ENCODE measurements at regions of chr2 and their contacts with region 1.

Region 1: DNA sequence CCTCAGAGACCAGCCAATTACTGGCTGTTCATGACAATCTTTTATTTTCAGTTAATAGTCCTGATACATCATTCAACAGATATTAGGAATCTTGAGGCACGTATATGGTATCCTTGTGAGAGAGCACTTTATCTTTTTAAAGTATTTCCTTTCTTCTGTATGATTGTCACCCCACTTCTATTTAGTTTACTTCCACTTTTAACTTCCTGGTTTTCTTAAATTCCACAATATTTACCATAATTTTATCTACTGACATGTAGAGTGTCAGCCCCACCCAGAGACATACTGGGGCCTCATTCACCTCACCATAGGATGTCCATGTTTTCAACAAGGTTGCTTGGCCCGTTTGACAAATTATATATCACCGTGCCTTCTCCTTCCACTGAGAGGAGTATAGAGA is 182.9 kb upstream of the ID2 start:
- DNase-seq: no peak
- H3K4me3 ChIP-seq: no peak overlapping the region
- H3K27ac ChIP-seq: no peak overlapping the region
- H3K4me1 ChIP-seq: no peaks in the 10 kb centered on the region
- H3K27me3 ChIP-seq: no peaks in the 10 kb centered on the region
- CTCF ChIP-seq: no peak
- POLR2A ChIP-seq: no peak

Region 2: GRCh38 chr2:8525582-8526402 is 26.8 kb after region 1 on chr2:
- intact Hi-C with region 1: loop called (anchors 1 kb)
- DNase-seq: peak; percentile 85 to 92
- H3K4me3 ChIP-seq: peak overlapping the region in 1 of 3 donors; percentile 26
- H3K27ac ChIP-seq: peak overlapping the region; percentile 65 to 67
- H3K4me1 ChIP-seq: no peaks in the 10 kb centered on the region
- H3K27me3 ChIP-seq: no peaks in the 10 kb centered on the region
- CTCF ChIP-seq: peak in 1 of 3 donors; percentile 17
- POLR2A ChIP-seq: no peak

Measured in breast epithelium (tissue), 4 donors.